ENCODE measurements at regions of chr11 and their contacts with region 1.

Region 1: DNA sequence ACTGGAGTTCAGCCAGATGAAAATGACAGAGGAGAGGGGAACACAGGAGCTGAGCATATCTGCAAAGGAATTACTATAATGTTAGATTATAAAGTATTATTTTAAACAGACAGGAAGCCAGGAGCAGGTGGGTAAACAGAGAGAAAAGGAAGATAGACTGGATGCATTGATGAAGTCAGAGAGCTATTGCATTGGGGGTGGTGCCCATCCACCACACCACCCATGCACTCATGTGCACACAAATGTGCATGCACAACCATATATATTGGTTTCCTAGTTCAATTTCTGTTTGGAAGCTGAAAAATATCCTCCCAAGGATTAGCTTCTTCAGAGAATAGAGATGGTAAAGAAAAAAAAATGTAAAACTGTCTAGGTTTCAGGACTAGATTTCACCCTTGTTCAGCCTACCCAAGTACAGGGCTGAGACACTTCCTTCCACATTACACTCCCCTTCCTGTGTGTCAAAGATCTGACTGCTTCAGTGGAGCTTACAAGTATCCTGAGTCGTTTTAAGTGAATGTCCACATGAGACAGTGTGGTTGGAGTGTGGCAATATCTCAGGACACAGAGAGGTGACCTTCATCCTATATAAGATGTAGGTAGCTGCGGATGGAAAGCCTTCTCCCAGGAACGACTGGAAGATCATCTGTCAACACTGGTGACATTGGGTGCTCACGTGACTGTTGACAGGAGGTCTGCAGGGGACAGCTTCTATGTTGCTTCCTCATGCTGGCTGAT is 12.2 kb upstream of the SMPD1 start:
- DNase-seq: no peak
- ATAC-seq: no peak
- H3K4me3 ChIP-seq: no peak overlapping the region
- H3K27ac ChIP-seq: no peak overlapping the region
- H3K4me1 ChIP-seq: no peaks in the 10 kb centered on the region
- H3K27me3 ChIP-seq: peaks cover 8% of the 10 kb centered on the region
- CTCF ChIP-seq: no peak

Region 2: DNA sequence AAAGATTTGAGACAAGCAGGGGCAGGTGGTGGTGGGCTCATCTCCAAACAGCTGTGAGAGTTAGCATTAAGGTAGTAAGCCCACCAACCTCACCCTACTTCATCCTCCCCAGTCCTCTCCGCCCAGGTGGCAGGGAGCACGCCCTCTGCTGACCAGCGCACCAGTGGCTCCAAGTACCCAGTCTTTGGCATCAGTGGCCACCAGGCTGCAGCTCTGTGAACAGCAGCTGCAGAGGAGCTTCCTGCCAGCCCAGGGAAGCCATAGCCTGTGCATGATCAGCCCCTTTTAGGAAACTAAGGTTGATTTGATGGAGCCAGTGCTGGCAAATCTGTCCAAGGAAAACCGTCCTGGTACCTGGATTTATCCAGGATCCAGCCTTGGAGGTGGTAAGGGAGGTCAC is 79.5 kb before region 1 on chr11:
- CTCF ChIA-PET with region 1: interaction called, 16 read pairs
- POLR2A ChIA-PET with region 1: no interaction called
- in situ Hi-C with region 1: no loop called
- intact Hi-C with region 1: no loop called
- DNase-seq: no peak
- ATAC-seq: peak; percentile 99
- H3K4me3 ChIP-seq: no peak overlapping the region
- H3K27ac ChIP-seq: no peak overlapping the region
- H3K4me1 ChIP-seq: no peaks in the 10 kb centered on the region
- H3K27me3 ChIP-seq: peaks cover 10% of the 10 kb centered on the region; the same call in 1 of the 2 replicates
- CTCF ChIP-seq: peak; percentile 98

Region 3: DNA sequence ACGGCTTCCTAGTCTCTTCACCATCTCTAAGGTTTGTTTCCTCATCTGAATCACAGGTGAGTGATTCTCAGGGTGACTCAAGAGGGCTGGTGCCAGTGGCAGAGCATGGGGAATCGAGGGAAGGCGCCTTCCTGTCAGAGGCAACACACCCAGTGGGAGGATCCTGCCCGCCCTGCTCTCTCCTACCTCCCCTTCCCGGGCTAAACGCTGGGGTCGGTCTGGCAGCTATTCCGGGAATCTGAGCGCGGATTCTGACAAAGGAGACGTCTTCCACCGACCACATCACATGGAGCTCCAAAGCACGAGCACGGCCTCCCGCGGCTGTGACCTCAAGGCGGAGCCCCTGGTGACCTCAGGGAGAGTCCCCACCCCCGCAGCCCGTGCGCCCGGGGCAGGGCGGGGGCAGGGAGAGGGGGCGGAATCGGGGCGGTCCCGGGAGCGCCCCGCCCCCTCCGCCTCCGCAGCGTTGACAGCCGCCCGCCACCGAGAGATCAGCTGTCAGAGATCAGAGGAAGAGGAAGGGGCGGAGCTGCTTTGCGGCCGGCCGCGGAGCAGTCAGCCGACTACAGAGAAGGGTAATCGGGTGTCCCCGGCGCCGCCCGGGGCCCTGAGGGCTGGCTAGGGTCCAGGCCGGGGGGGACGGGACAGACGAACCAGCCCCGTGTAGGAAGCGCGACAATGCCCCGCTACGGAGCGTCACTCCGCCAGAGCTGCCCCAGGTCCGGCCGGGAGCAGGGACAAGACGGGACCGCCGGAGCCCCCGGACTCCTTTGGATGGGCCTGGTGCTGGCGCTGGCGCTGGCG is 12.1 kb after region 1 on chr11 and contains the start of gene SMPD1:
- CTCF ChIA-PET with region 1: interaction called, 13 read pairs
- POLR2A ChIA-PET with region 1: no interaction called
- in situ Hi-C with region 1: no loop called
- intact Hi-C with region 1: no loop called
- DNase-seq: peak; percentile 86
- ATAC-seq: peak; percentile 97
- H3K4me3 ChIP-seq: peak within 1 kb of the TSS; percentile 58 to 66
- H3K27ac ChIP-seq: peak within 1 kb of the TSS; percentile 44
- H3K4me1 ChIP-seq: peaks cover 8% of the 10 kb centered on the region
- H3K27me3 ChIP-seq: no peaks in the 10 kb centered on the region
- CTCF ChIP-seq: no peak
- total RNA-seq, gene SMPD1: 20.0 TPM

Region 4: DNA sequence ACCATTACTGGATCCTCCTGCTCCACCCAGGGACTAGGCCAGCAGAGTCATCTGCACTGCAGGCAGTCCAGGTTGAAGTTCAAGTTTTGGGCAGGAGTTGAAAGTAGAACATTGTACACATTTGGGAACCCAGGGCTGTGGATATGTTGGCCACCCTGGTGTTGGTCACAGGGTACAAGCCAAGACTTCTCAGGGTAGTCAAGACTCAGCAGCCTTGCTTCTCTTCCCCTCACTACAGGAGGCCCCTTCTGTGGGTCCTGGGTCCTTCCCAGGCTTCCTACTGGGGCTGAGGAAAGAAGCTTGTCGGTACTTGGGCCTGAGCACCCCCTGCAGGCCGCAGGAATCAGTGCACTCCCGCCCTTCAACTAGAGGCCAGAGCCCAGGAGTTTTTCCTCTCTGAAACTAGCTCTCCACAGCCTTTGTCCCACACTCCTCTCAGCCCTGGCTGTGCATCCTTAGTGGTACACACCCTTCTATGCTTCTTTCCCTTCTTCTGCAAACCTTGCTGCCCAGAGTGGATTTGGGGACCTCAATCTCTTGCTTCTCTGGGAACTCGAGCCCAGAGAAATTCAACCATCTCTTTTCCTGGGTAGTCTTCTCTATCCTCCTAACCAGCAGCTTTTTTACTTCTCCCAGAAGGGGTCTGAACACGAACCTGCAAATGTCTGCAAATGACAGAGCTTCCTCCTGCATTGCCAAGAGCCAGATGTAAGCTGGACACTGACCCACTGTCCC is 65.4 kb after region 1 on chr11:
- CTCF ChIA-PET with region 1: interaction called, 65 read pairs
- POLR2A ChIA-PET with region 1: no interaction called
- in situ Hi-C with region 1: no loop called
- intact Hi-C with region 1: loop called (anchors 1 kb)
- DNase-seq: peak; percentile 41
- ATAC-seq: peak; percentile 85
- H3K4me3 ChIP-seq: no peak overlapping the region
- H3K27ac ChIP-seq: no peak overlapping the region
- H3K4me1 ChIP-seq: no peaks in the 10 kb centered on the region
- H3K27me3 ChIP-seq: no peaks in the 10 kb centered on the region
- CTCF ChIP-seq: peak; percentile 96

Region 5: GRCh38 chr11:6505577-6506240 is 127.6 kb after region 1 on chr11:
- CTCF ChIA-PET with region 1: interaction called, 42 read pairs
- POLR2A ChIA-PET with region 1: no interaction called
- in situ Hi-C with region 1: no loop called
- intact Hi-C with region 1: loop called (anchors 1 kb)
- DNase-seq: peak; percentile 64
- ATAC-seq: peak; percentile 88
- H3K4me3 ChIP-seq: no peak overlapping the region
- H3K27ac ChIP-seq: no peak overlapping the region
- H3K4me1 ChIP-seq: no peaks in the 10 kb centered on the region
- H3K27me3 ChIP-seq: no peaks in the 10 kb centered on the region
- CTCF ChIP-seq: peak; percentile 91

Region 6: DNA sequence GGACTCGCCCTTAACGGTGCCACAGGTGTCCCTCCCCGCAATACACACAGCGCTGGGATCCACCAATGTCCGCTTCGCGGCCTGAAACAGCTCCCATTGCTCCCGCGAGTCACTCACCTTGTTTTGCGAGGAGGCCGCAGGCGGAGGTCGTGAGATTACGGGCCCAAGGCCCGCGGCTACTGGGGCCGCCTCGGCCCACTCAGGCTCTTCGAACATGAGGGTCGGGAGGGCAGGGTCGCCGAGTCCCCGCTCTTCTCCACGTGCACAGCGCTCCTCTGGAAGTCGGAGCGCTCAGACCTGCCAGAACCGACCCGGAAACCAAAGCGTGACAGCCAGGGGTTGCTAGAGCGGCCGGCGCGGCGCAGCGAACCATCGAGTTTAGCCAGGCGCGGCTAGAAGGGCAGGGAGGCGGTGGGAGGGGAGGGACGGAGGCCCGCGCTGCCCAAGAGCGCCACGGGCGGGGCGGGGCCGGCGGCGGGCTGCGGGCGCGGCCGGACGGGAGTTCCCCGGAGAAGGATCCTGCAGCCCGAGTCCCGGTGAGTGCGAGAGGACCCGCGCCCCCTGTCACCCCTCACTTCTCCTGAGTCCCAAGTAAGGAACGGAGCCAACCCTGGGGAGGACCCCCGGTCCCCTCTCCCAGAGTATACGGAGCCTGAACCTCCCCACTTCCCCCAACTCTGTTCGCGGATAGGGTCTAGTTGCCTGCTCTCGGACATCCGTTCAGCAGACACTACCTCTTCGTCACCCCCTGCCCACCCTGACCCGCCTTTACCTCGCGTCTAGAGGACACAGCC is 225.4 kb after region 1 on chr11 and contains the starts of genes ILK and RRP8:
- CTCF ChIA-PET with region 1: no interaction called
- POLR2A ChIA-PET with region 1: no interaction called
- in situ Hi-C with region 1: no loop called
- intact Hi-C with region 1: loop called (anchors 10 kb)
- DNase-seq: no peak
- ATAC-seq: peak; percentile 93
- H3K4me3 ChIP-seq: peak within 1 kb of the TSS; percentile 95 to 98
- H3K27ac ChIP-seq: peak within 1 kb of the TSS; percentile 98
- H3K4me1 ChIP-seq: peaks cover 46% of the 10 kb centered on the region
- H3K27me3 ChIP-seq: no peaks in the 10 kb centered on the region
- CTCF ChIP-seq: no peak; the same call in 1 of the 2 replicates
- total RNA-seq, gene ILK: 204 TPM
- total RNA-seq, gene RRP8: 23.1 TPM

Region 7: DNA sequence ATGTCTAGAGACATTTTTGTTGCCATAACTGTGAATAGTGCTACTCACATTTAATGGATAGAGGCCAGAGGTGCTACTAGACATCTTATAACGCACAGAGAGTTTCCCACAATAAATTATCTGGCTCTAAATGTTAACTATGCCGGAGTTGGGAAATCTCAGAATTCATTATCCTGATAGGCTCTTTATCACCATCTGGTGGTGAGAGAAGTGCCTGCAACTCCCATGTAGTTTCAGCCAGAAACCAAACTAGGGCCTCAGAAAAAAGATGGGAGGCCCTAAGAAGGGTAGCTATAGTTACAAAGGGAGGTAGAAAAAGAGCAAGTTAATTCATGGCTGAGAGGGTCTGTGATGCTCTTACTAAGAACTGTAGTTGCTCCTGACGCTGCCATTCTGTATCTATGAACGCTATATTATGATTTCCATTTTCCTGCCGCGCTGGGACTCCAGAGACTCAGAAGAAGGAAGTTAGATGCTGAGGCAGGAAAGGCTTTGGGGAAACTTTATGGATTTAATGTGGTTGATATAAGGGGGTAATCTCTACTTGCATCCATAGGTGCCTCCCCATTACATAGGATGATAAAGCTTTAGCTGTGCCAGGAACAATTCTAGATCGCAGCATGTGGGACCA is 327.9 kb after region 1 on chr11:
- CTCF ChIA-PET with region 1: interaction called, 12 read pairs
- POLR2A ChIA-PET with region 1: no interaction called
- in situ Hi-C with region 1: no loop called
- intact Hi-C with region 1: loop called (anchors 2 kb)
- DNase-seq: no peak
- ATAC-seq: peak; percentile 69
- H3K4me3 ChIP-seq: no peak overlapping the region
- H3K27ac ChIP-seq: no peak overlapping the region
- H3K4me1 ChIP-seq: no peaks in the 10 kb centered on the region
- H3K27me3 ChIP-seq: 0 out of 2 replicates have a peak, but pooled peaks cover 2% of the 10 kb centered on the region
- CTCF ChIP-seq: peak; percentile 98

Measured in Panc1 (cell line).